CD4-positive, alpha-beta memory T cell (primary cell): ENCODE measurements at regions of chr4 and their contacts with region 1.

Region 1: GRCh38 chr4:148366251-148366650 is 76.0 kb downstream of the NR3C2 start:
- DNase-seq: no peak
- H3K4me3 ChIP-seq: no peak overlapping the region
- H3K4me3 Mint-ChIP-seq: peak overlapping the region in 1 of 8 donors; percentile 32
- H3K27ac ChIP-seq: no peak overlapping the region
- H3K27ac Mint-ChIP-seq: peak overlapping the region in 2 of 7 donors; percentile 10 to 65
- H3K4me1 ChIP-seq: peaks cover 3% of the 10 kb centered on the region
- H3K4me1 Mint-ChIP-seq: peaks cover 29 to 53% (median 39%) of the 10 kb centered on the region in 4 donors
- H3K27me3 ChIP-seq: no peaks in the 10 kb centered on the region
- H3K27me3 Mint-ChIP-seq: no peaks in the 10 kb centered on the region

Region 2: DNA sequence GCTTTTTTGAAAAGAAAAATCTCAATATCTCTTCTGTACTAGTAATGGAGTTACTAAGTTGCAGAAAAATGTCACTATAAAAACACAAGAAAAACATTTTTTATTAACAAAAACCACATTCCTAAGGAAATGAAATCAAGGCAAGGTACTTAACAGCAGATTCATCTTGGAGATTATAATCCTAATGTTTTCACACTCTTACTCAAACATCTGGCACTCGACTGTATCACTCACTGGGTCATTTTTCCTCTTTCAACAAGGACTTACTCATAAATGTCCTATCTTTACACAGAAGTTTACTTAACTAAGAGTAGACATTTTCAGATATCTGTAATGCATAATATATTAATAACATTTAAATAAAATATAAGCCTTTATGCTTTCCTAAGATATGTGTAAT is 140.6 kb before region 1 on chr4:
- CTCF ChIA-PET with region 1: no interaction called
- POLR2A ChIA-PET with region 1: no interaction called
- intact Hi-C with region 1: loop called (anchors 10 kb)
- DNase-seq: no peak
- H3K4me3 ChIP-seq: no peak overlapping the region
- H3K4me3 Mint-ChIP-seq: no peak overlapping the region
- H3K27ac ChIP-seq: no peak overlapping the region
- H3K27ac Mint-ChIP-seq: no peak overlapping the region
- H3K4me1 ChIP-seq: no peaks in the 10 kb centered on the region
- H3K4me1 Mint-ChIP-seq: peaks cover 0 to 19% (median 12%) of the 10 kb centered on the region in 4 donors
- H3K27me3 ChIP-seq: no peaks in the 10 kb centered on the region
- H3K27me3 Mint-ChIP-seq: no peaks in the 10 kb centered on the region